IMR-90 (cell line): ENCODE measurements at regions of chr22 and their contacts with region 1.

Region 1: GRCh38 chr22:38872172-38872830 is at the start of gene CBX6:
- DNase-seq: peak; percentile 90
- ATAC-seq: peak; percentile 82
- H3K4me3 ChIP-seq: peak within 1 kb of the TSS; percentile 95
- H3K27ac ChIP-seq: peak within 1 kb of the TSS; percentile 95
- H3K4me1 ChIP-seq: no peaks in the 10 kb centered on the region
- H3K27me3 ChIP-seq: no peaks in the 10 kb centered on the region
- CTCF ChIP-seq: no peak
- POLR2A ChIP-seq: no peak; the same call in 1 of the 2 replicates
- RAD21 ChIP-seq: no peak
- total RNA-seq, gene CBX6: 15.2 and 17.5 TPM in 2 replicates

Region 2: DNA sequence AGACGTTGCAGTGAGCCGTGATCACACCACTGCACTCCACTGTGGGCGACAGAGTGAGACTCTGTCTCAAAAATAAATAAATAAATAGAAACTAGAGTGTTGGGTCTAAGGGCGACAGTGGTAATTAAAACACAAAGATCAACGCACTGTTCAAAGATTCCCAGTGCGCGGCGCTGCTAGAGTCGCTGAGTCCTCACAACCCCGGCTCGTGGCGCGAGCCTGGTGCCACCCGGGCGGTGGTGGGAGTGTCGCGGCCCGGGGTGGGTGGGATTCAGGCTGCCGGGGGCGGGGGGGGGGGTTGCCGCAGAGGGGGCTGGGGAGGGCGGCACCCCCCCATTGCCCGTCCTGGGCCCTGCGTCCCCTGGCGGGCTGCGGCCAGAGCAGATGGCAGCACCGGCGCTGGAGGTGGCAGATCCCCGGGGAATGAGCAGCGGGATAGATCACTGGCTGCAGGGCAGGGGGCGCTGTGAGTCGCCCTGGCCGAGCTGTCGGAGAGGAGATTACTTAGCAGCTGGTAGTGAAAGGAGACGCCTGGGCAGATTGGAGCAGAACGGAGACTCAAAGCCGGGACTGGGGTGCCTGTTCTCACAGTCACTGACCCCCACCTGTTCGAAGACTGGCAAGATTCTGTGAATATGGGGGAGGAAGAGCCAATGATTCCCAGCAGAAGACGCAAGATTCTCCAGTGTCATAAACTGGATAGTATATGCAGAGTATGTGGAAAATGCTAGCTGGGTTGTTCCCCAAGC is 54.9 kb after region 1 on chr22:
- CTCF ChIA-PET with region 1: interaction called, 5 read pairs
- POLR2A ChIA-PET with region 1: no interaction called
- dilution Hi-C with region 1: no loop called
- in situ Hi-C with region 1: no loop called
- intact Hi-C with region 1: loop called (anchors 2 kb)
- DNase-seq: peak; percentile 37
- ATAC-seq: peak; percentile 56
- H3K4me3 ChIP-seq: no peak overlapping the region
- H3K27ac ChIP-seq: no peak overlapping the region
- H3K4me1 ChIP-seq: peaks cover 6% of the 10 kb centered on the region
- H3K27me3 ChIP-seq: no peaks in the 10 kb centered on the region; the same call in 1 of the 2 replicates
- CTCF ChIP-seq: peak; percentile 63
- POLR2A ChIP-seq: no peak
- RAD21 ChIP-seq: peak; percentile 37; the same call in 1 of the 2 replicates

Region 3: DNA sequence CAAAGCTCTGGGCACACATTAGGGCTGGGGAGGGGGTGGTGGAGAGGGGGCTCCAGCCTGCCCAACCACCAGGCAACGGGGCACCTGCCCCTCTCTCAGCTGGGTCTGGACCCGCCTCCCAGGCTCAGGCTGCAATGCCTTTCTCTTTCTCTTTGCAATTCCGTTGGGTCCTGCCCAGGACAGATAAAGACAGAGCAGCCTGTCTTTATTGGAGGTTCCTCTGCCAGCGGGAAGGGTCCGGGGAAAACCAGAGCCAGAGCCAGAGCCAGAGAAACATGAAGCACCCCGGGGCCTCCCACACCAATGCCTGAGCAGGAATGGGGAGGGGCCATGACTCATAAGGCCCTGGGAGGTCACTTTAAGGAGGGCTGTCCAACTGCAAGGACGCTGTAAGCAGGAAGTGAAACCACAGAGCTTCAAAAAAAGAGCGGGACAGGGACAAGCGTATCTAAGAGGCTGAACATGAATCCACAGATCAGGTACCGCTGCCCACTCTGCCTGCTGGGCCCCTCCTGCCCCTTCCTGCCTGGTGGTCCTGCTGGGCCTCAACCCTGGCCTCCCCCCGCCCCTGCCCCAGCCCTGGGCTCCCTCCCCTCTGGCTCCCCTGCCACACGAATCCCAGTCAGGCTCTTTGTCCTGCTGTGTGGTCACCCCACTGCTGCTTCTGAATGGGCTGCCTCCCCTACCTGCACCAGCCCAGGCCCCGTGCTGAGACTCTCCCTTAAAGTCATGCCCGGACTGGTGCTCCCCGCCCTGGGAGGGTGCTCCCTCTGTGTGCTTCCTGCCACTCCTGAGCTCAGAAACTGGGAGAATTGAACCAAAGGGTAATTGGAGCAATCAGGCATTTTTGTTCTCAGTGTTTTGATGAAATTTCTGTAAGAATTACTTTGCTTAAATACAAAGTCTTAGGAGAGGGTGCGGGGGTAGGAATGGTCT is 110.0 kb after region 1 on chr22 and contains the start of gene APOBEC3B:
- CTCF ChIA-PET with region 1: interaction called, 3 read pairs
- POLR2A ChIA-PET with region 1: no interaction called
- dilution Hi-C with region 1: no loop called
- in situ Hi-C with region 1: no loop called
- intact Hi-C with region 1: loop called (anchors 5 kb)
- DNase-seq: peak; percentile 95
- ATAC-seq: peak; percentile 100
- H3K4me3 ChIP-seq: peak within 1 kb of the TSS; percentile 22
- H3K27ac ChIP-seq: peak within 1 kb of the TSS; percentile 43; the same call in 1 of the 2 replicates
- H3K4me1 ChIP-seq: peaks cover 8% of the 10 kb centered on the region
- H3K27me3 ChIP-seq: no peaks in the 10 kb centered on the region
- CTCF ChIP-seq: no peak
- POLR2A ChIP-seq: peak; percentile 31; the same call in 1 of the 2 replicates
- RAD21 ChIP-seq: no peak
- total RNA-seq, gene APOBEC3B: 17.2 and 17.6 TPM in 2 replicates

Region 4: DNA sequence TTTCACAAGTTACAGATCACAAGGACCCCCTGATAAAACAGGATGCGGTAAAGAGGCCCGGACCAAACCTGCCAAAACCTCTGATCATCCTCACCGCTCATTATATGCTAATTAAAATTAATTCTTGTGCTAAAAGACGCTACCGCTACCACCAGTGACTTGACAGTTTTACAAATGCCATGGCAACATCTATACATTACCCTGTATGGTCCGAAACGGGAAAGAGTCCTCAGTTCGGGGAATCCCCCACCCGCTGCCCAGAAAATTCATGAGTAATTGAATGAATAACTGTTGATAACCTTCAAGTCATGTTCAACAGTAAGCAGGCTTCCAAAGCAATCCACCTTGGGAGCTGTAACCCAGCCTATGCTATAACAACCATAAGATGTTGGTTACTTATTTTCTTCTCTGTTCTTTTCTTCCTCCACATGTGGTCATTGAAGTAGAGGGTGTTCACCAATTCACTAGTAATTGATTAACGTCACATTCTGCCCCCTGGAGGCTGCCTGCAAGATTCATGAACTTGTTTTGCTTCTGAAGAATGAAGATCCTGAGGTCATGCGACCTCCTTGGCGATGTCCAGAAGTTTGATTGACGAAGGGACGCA is 245.4 kb after region 1 on chr22:
- CTCF ChIA-PET with region 1: no interaction called
- POLR2A ChIA-PET with region 1: no interaction called
- dilution Hi-C with region 1: no loop called
- in situ Hi-C with region 1: loop called (anchors 25 kb)
- intact Hi-C with region 1: loop called (anchors 1 kb)
- DNase-seq: peak; percentile 49
- ATAC-seq: no peak; the same call in 1 of the 2 replicates
- H3K4me3 ChIP-seq: no peak overlapping the region
- H3K27ac ChIP-seq: no peak overlapping the region
- H3K4me1 ChIP-seq: no peaks in the 10 kb centered on the region
- H3K27me3 ChIP-seq: peaks cover 38% of the 10 kb centered on the region
- CTCF ChIP-seq: peak; percentile 58
- POLR2A ChIP-seq: no peak
- RAD21 ChIP-seq: peak; percentile 49

Region 5: GRCh38 chr22:39306581-39307361 is 434.5 kb after region 1 on chr22:
- CTCF ChIA-PET with region 1: no interaction called
- POLR2A ChIA-PET with region 1: no interaction called
- dilution Hi-C with region 1: no loop called
- in situ Hi-C with region 1: loop called (anchors 10 kb)
- intact Hi-C with region 1: loop called (anchors 5 kb)
- DNase-seq: no peak
- ATAC-seq: no peak
- H3K4me3 ChIP-seq: no peak overlapping the region
- H3K27ac ChIP-seq: no peak overlapping the region
- H3K4me1 ChIP-seq: peaks cover 15% of the 10 kb centered on the region
- H3K27me3 ChIP-seq: no peaks in the 10 kb centered on the region
- CTCF ChIP-seq: peak; percentile 40
- POLR2A ChIP-seq: 0 out of 2 replicates have a peak, but pooled peaks have one; percentile 27
- RAD21 ChIP-seq: peak; percentile 28